ENCODE measurements at regions of chr10 and their contacts with region 1.

Region 1: GRCh38 chr10:7525314-7526016 is 114.6 kb upstream of the SFMBT2 start:
- DNase-seq: peak; percentile 67
- ATAC-seq: peak; percentile 79
- H3K4me3 Mint-ChIP-seq: no peak overlapping the region
- H3K27ac Mint-ChIP-seq: no peak overlapping the region
- H3K4me1 Mint-ChIP-seq: peaks cover 4% of the 10 kb centered on the region; the same call in 1 of the 2 replicates
- H3K27me3 Mint-ChIP-seq: no peaks in the 10 kb centered on the region; the same call in 1 of the 2 replicates
- CTCF ChIP-seq: peak; percentile 66

Region 2: DNA sequence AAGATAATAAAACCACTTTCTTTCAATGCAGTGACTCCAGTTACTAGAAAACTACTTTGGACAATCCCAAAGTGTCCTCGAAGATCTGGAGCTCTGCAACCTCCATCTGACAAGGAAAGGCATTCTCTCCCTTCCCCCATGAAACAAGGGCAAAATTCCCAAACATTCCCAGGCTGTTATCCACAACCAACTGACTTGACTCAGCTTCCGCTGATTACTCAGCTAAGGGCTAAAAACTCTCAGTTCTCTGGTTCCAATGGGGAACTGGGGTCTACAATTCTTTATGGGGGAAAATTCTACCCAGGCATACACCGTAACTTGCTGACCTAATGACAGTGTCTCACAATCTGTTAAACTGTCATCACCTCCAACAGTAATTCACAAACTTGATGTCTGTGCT is 163.0 kb before region 1 on chr10:
- CTCF ChIA-PET with region 1: no interaction called
- POLR2A ChIA-PET with region 1: no interaction called
- DNase-seq: no peak
- ATAC-seq: no peak
- H3K4me3 Mint-ChIP-seq: no peak overlapping the region
- H3K27ac Mint-ChIP-seq: no peak overlapping the region
- H3K4me1 Mint-ChIP-seq: peaks cover 19% of the 10 kb centered on the region
- H3K27me3 Mint-ChIP-seq: no peaks in the 10 kb centered on the region
- CTCF ChIP-seq: no peak

Region 3: GRCh38 chr10:7491949-7492659 is 33.4 kb before region 1 on chr10:
- CTCF ChIA-PET with region 1: interaction called, 12 read pairs
- POLR2A ChIA-PET with region 1: no interaction called
- DNase-seq: no peak
- ATAC-seq: no peak
- H3K4me3 Mint-ChIP-seq: no peak overlapping the region
- H3K27ac Mint-ChIP-seq: no peak overlapping the region
- H3K4me1 Mint-ChIP-seq: peaks cover 32% of the 10 kb centered on the region
- H3K27me3 Mint-ChIP-seq: peaks cover 7% of the 10 kb centered on the region; the same call in 1 of the 2 replicates
- CTCF ChIP-seq: no peak

Region 4: GRCh38 chr10:7622969-7623368 is 97.5 kb after region 1 on chr10:
- CTCF ChIA-PET with region 1: interaction called, 20 read pairs
- POLR2A ChIA-PET with region 1: no interaction called
- DNase-seq: peak; percentile 59
- ATAC-seq: peak; percentile 98
- H3K4me3 Mint-ChIP-seq: no peak overlapping the region
- H3K27ac Mint-ChIP-seq: peak overlapping the region; percentile 94
- H3K4me1 Mint-ChIP-seq: peaks cover 6% of the 10 kb centered on the region
- H3K27me3 Mint-ChIP-seq: no peaks in the 10 kb centered on the region
- CTCF ChIP-seq: no peak

Region 5: DNA sequence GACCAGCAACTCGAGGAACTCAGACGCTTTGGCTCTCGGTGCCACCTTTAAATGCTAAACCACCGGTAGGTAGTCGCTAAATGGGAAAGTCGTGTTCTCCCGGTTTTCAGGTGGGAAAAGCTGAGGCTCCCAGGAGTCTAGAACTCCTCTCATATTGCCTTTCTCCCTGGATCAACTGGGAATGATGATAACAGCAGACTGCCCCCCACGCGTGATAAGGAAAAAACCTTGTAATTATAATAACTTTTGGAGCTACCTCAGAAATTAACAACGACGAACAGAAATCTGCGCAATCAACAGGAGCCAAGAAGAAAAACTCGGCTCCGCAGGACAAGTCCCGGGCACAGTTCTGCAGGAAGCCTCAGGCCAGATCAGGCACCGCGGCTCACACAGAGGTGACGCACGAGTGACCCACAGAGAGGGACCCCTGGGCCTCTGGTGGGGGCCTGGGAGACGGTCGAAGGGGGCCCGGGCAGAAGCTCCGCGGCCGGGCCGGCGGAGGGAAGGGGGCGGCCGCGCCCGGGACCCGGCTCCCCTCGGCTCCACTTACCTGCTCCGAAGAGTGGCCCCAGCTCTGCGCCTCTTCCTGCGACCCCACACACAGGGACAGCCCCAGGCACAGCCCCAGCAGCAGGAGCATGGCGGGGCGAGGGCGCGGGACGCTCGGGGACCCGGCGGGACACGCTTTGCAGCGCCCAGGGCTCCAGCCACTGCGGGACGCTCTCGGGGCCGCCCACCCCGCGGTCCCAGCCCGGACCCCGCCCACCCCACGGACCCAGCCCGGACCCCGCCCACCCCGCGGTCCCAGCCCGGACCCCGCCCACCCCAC is 141.0 kb after region 1 on chr10 and contains the start of gene ITIH5:
- CTCF ChIA-PET with region 1: interaction called, 19 read pairs
- POLR2A ChIA-PET with region 1: no interaction called
- DNase-seq: peak; percentile 50
- ATAC-seq: peak; percentile 56
- H3K4me3 Mint-ChIP-seq: peak within 1 kb of the TSS; percentile 83
- H3K27ac Mint-ChIP-seq: no peak within 1 kb of the TSS
- H3K4me1 Mint-ChIP-seq: peaks cover 16% of the 10 kb centered on the region
- H3K27me3 Mint-ChIP-seq: peaks cover 44% of the 10 kb centered on the region
- CTCF ChIP-seq: no peak
- total RNA-seq, gene ITIH5: 3.1 to 3.8 TPM (median 3.6 TPM) in 3 replicates

Region 6: DNA sequence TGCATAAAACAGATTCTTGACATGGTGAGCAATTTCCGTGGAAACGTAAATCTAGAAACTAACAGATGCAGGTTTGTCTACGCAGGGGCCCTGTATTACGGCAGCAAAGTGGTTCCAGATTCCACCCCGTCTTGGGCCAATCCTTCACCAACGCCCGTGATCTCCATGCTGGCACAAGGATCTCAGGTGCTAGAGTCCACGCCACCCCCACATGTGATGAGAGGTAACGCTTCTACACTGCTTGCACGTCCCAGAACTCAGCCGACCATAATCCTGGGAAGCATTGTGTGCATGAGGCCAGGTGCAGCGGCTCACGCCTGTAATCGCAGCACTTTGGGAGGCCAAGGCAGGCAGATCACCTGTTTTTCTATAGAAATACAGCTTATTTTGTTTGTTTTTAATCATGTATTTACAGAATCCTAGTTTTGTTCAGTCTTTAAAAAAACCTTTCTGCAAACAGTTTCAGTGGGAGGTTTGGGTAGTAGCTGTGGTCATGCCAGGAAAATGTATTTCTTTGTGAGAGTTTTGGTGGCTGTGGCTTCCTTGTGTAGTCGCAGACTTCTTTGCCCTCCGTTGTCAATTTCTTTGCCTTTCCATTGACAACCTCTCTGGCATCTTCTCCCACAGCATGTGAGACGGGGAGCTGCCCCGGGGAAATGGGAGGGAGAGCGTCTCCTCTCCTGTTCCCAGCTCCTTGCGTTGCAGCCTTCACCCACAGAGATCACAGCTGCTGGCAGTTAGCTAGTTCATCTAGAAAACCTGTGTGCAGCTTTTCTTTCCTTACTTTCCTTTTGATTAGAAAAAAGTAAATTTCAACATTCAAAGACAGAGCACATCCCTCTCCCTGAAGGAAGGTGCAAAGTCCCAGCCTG is 213.3 kb after region 1 on chr10:
- CTCF ChIA-PET with region 1: interaction called, 16 read pairs
- POLR2A ChIA-PET with region 1: no interaction called
- DNase-seq: no peak
- ATAC-seq: no peak; the same call in 1 of the 2 replicates
- H3K4me3 Mint-ChIP-seq: no peak overlapping the region
- H3K27ac Mint-ChIP-seq: no peak overlapping the region
- H3K4me1 Mint-ChIP-seq: no peaks in the 10 kb centered on the region
- H3K27me3 Mint-ChIP-seq: no peaks in the 10 kb centered on the region
- CTCF ChIP-seq: no peak